ENCODE measurements at regions of chr3 and their contacts with region 1.

Region 1: GRCh38 chr3:187919048-187919447 is 173.8 kb upstream of the BCL6 start:
- DNase-seq: no peak
- H3K4me3 ChIP-seq: no peak overlapping the region
- H3K27ac ChIP-seq: no peak overlapping the region
- H3K4me1 ChIP-seq: peaks cover 20 to 57% (median 48%) of the 10 kb centered on the region in 4 donors
- H3K27me3 ChIP-seq: no peaks in the 10 kb centered on the region
- CTCF ChIP-seq: no peak
- EP300 ChIP-seq: no peak
- POLR2A ChIP-seq: no peak

Region 2: GRCh38 chr3:187878776-187879518 is 40.1 kb before region 1 on chr3:
- intact Hi-C with region 1: no loop called
- DNase-seq: no peak
- H3K4me3 ChIP-seq: no peak overlapping the region
- H3K27ac ChIP-seq: no peak overlapping the region
- H3K4me1 ChIP-seq: no peaks in the 10 kb centered on the region
- H3K27me3 ChIP-seq: no peaks in the 10 kb centered on the region
- CTCF ChIP-seq: no peak
- EP300 ChIP-seq: no peak
- POLR2A ChIP-seq: no peak

Region 3: GRCh38 chr3:187974871-187975271 is 55.8 kb after region 1 on chr3:
- intact Hi-C with region 1: loop called (anchors 5 kb)
- DNase-seq: no peak
- H3K4me3 ChIP-seq: no peak overlapping the region
- H3K27ac ChIP-seq: no peak overlapping the region
- H3K4me1 ChIP-seq: peaks cover 0 to 15% (median 5%) of the 10 kb centered on the region in 4 donors
- H3K27me3 ChIP-seq: no peaks in the 10 kb centered on the region
- CTCF ChIP-seq: no peak
- EP300 ChIP-seq: no peak
- POLR2A ChIP-seq: no peak

Region 4: GRCh38 chr3:188468662-188469061 is 549.6 kb after region 1 on chr3:
- intact Hi-C with region 1: no loop called
- DNase-seq: no peak
- H3K4me3 ChIP-seq: no peak overlapping the region
- H3K27ac ChIP-seq: peak overlapping the region; percentile 46 to 71 (median 55)
- H3K4me1 ChIP-seq: peaks cover 22 to 99% (median 78%) of the 10 kb centered on the region in 4 donors
- H3K27me3 ChIP-seq: no peaks in the 10 kb centered on the region
- CTCF ChIP-seq: no peak
- EP300 ChIP-seq: no peak
- POLR2A ChIP-seq: no peak